A549 (cell line): ENCODE measurements at regions of chr17 and their contacts with region 1.

Region 1: DNA sequence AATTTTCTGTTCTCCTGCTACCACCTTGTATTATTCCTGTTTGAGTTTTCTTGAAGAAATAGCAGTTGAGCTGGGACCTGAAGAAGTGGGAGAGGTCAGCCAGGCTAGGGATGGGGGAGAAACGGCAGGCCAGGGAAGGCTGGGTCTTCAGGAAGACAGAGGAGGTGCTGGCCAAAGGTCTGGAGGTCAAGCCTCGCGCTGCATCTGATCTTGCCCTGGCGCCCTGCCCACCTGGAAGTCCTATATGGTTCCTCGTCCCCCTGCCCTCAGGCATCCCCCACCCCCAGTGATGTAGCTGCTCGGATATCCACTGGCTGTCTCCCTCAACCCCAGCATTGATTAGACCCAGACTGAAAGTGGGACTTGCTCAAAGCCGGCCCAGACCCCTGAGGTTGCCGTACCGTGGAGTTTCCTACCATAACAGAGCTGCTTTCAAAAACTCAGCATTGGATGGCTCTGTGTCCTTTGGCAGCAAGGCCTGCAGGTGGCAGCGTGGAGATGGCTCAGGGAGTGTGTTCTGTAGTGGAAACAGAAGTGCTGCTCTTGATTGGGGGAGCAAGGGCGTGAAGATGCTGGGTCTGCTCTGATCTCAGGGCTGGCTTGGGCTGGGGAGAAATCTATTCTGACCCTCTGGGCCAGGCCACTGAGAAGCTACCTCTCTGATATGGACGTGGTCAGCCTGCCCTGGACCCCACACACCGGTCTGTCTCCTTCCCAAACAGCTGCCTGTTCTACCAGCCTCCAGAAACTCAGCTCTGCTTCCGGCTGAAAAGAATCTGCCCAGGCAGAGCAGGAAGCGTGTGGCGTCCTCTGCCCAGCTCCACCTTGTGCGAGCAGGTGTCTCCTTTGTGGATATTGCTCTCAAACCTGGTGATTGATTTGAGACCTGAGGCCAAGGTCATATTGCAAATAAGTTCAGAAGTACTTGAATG is 107.0 kb upstream of the CACNG5 start:
- DNase-seq: peak; percentile 68 to 72
- ATAC-seq: peak; percentile 87 to 89
- H3K4me3 ChIP-seq: no peak overlapping the region
- H3K27ac ChIP-seq: no peak overlapping the region
- H3K4me1 ChIP-seq: peaks cover 22% of the 10 kb centered on the region
- CTCF ChIP-seq: peak; percentile 64
- EP300 ChIP-seq: no peak
- POLR2A ChIP-seq: no peak
- RAD21 ChIP-seq: peak; percentile 68 to 69

Region 2: DNA sequence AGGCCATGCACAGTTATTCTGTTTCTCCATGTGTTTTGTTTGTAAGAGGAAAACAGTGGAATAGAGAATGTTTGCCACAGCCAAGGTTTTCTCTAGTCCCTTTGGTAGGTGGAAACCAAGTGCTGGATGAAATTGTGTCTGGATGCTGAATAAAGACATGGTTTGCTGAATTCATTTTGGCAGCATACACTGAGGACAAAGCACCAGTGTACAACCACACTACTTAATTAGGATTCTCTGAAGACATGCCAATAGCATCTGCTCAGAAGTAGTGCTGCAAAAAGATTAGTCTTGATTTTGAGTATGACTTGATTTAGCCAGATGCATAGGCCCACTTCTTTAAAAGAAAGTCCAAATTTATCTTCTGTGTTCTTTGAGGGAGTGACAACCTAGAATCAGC is 123.5 kb before region 1 on chr17:
- CTCF ChIA-PET with region 1: no interaction called
- POLR2A ChIA-PET with region 1: no interaction called
- DNase-seq: no peak
- ATAC-seq: no peak
- H3K4me3 ChIP-seq: no peak overlapping the region
- H3K27ac ChIP-seq: no peak overlapping the region
- H3K4me1 ChIP-seq: no peaks in the 10 kb centered on the region
- CTCF ChIP-seq: no peak
- EP300 ChIP-seq: no peak
- POLR2A ChIP-seq: no peak
- RAD21 ChIP-seq: no peak

Region 3: GRCh38 chr17:66625311-66625775 is 102.6 kb before region 1 on chr17:
- CTCF ChIA-PET with region 1: no interaction called
- POLR2A ChIA-PET with region 1: no interaction called
- DNase-seq: peak; percentile 67 to 85
- ATAC-seq: peak; percentile 87 to 94
- H3K4me3 ChIP-seq: no peak overlapping the region
- H3K27ac ChIP-seq: no peak overlapping the region
- H3K4me1 ChIP-seq: peaks cover 8% of the 10 kb centered on the region; the same call in 2 of the 3 replicates
- CTCF ChIP-seq: peak; percentile 91
- EP300 ChIP-seq: no peak
- POLR2A ChIP-seq: no peak
- RAD21 ChIP-seq: peak; percentile 90 to 94

Region 4: GRCh38 chr17:66715745-66716156 is 12.2 kb before region 1 on chr17:
- CTCF ChIA-PET with region 1: interaction called, 44 read pairs
- POLR2A ChIA-PET with region 1: no interaction called
- DNase-seq: peak; percentile 80 to 89
- ATAC-seq: peak; percentile 71 to 81
- H3K4me3 ChIP-seq: no peak overlapping the region
- H3K27ac ChIP-seq: no peak overlapping the region
- H3K4me1 ChIP-seq: peaks cover 32% of the 10 kb centered on the region
- CTCF ChIP-seq: peak; percentile 90
- EP300 ChIP-seq: no peak
- POLR2A ChIP-seq: no peak
- RAD21 ChIP-seq: peak; percentile 91

Region 5: GRCh38 chr17:66900126-66901010 is 172.5 kb after region 1 on chr17:
- CTCF ChIA-PET with region 1: interaction called, 37 read pairs
- POLR2A ChIA-PET with region 1: no interaction called
- DNase-seq: peak; percentile 32 to 39
- ATAC-seq: peak in 1 of 2 experiments; percentile 30; a peak in 3 of 6 replicates
- H3K4me3 ChIP-seq: no peak overlapping the region
- H3K27ac ChIP-seq: 0 out of 6 replicates have a peak overlapping the region, but pooled peaks of 1 of the 2 experiments have one; percentile 9
- H3K4me1 ChIP-seq: peaks cover 19% of the 10 kb centered on the region
- CTCF ChIP-seq: peak; percentile 82
- EP300 ChIP-seq: no peak
- POLR2A ChIP-seq: no peak
- RAD21 ChIP-seq: peak; percentile 71 to 72

Region 6: GRCh38 chr17:66906321-66907278 is 178.7 kb after region 1 on chr17:
- CTCF ChIA-PET with region 1: interaction called, 37 read pairs
- POLR2A ChIA-PET with region 1: no interaction called
- DNase-seq: peak; percentile 71 to 88
- ATAC-seq: peak in 1 of 2 experiments; percentile 28; a peak in 3 of 6 replicates
- H3K4me3 ChIP-seq: no peak overlapping the region
- H3K27ac ChIP-seq: peak overlapping the region; percentile 77 to 81
- H3K4me1 ChIP-seq: peaks cover 31% of the 10 kb centered on the region
- CTCF ChIP-seq: peak; percentile 96
- EP300 ChIP-seq: no peak
- POLR2A ChIP-seq: no peak
- RAD21 ChIP-seq: peak; percentile 90 to 96

Region 7: DNA sequence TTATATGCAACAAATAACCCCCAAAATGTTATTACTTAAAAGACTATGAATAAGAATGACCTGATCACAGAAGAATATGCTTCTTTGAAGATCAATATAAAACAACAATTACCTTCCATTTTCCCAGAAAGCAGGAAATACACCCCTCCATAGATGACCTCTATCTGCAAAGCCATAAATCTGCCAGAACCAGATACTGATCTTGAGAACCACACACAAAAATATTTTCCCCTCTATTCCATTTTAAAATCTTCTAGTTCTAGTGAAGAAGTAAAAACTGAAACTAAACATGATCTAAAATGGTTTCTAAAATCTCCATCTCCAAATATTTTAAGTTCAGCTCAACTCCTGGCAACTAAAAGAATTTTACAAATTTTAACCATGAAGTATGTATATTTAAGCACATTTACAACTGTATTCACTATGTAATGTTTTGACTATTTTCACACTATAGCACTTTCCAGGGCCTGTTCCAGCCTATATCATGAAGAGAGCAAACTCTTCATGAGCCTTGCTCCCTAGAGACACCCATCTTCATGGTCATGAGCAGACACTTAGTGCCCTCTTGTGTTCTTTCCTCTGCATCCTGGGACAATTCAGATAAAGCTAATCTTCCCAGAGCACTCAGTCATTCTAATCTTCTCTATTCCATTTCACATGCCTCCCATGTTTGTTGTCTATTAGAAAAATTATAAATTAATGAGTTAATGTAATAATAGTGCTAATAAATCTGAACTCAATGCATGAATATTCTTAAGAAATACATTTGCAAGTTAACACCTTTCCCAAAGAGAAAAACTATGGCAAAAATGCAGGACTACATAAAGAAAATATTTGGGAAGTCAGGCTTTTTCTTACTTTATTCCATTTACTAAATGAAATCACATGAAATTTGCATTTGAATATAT is 430.1 kb after region 1 on chr17:
- CTCF ChIA-PET with region 1: interaction called, 70 read pairs
- POLR2A ChIA-PET with region 1: no interaction called
- DNase-seq: peak; percentile 28 to 71
- ATAC-seq: peak; percentile 95 to 97
- H3K4me3 ChIP-seq: no peak overlapping the region
- H3K27ac ChIP-seq: no peak overlapping the region
- H3K4me1 ChIP-seq: peaks cover 4% of the 10 kb centered on the region; the same call in 1 of the 3 replicates
- CTCF ChIP-seq: peak; percentile 84
- EP300 ChIP-seq: no peak
- POLR2A ChIP-seq: no peak
- RAD21 ChIP-seq: peak; percentile 85 to 89